Head of caudate nucleus (tissue), 42 donors: ENCODE measurements at regions of chr5 and their contacts with region 1.

Region 1: GRCh38 chr5:80487829-80488721 is at the start of gene FAM151B:
- DNase-seq: peak; percentile 64 to 95 (median 88)

Region 2: GRCh38 chr5:80414113-80414512 is 74.0 kb before region 1 on chr5:
- intact Hi-C with region 1: loop called (anchors 10 kb)
- DNase-seq: no peak

Region 3: DNA sequence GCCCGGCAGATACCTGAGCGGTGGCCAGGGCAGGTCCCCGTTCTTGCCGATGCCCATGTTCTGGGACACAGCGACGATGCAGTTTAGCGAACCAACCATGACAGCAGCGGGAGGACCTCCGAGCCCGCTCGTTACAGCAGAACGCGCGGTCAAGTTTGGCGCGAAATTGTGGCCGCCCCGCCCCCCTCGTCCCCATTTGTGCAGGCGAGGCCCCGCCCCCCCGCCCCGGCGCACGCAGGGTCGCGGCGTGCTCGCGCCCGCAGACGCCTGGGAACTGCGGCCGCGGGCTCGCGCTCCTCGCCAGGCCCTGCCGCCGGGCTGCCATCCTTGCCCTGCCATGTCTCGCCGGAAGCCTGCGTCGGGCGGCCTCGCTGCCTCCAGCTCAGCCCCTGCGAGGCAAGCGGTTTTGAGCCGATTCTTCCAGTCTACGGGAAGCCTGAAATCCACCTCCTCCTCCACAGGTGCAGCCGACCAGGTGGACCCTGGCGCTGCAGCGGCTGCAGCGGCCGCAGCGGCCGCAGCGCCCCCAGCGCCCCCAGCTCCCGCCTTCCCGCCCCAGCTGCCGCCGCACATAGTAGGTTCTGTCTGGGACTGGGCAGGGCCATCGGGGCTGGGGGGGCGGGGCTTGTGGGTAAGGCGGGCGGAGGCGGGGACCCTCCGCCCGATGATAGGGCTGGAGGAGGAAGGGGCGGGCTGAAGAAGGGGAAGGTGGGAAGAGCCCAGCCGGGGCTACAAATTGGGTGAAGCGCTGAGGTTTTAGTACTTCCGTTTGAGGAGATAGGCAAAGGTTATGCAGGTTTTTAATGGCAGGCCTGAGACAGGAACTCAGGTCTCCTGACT is 166.5 kb after region 1 on chr5 and contains the starts of genes DHFR and MSH3:
- intact Hi-C with region 1: loop called (anchors 5 kb)
- DNase-seq: peak; percentile 69 to 93 (median 87)